MCF 10A (cell line): ENCODE measurements at regions of chr12 and their contacts with region 1.

Region 1: DNA sequence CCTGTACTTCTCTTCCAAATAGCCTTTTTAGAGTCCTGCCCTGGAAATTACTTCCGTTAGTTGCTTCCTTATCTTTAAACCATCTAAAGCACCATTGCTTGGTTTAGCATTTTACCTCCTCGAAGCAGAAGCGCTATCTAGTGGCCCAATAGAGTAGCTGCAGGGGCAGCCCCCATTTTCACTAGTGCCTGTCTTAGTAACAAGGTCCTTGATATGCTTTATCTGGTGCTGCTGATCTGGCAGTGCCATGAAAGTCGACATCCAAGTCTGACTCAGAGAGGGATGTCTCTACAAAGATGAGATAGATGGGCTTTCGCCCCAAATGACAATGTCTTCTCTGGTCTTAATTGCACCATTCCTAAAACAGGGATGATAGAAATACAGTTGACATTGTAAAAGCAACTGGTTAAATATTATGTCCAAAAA is 25.0 kb upstream of the CIT start:
- DNase-seq: peak; percentile 78
- H3K4me3 Mint-ChIP-seq: no peak overlapping the region
- H3K27ac Mint-ChIP-seq: no peak overlapping the region
- H3K4me1 Mint-ChIP-seq: peaks cover 10% of the 10 kb centered on the region
- H3K27me3 Mint-ChIP-seq: no peaks in the 10 kb centered on the region
- CTCF ChIP-seq: peak; percentile 86

Region 2: GRCh38 chr12:119667577-119668323 is 234.3 kb before region 1 on chr12 and contains the start of gene PRKAB1:
- CTCF ChIA-PET with region 1: no interaction called
- POLR2A ChIA-PET with region 1: interaction called, 5 read pairs
- intact Hi-C with region 1: loop called (anchors 5 kb)
- DNase-seq: peak; percentile 98
- H3K4me3 Mint-ChIP-seq: peak within 1 kb of the TSS; percentile 85
- H3K27ac Mint-ChIP-seq: peak within 1 kb of the TSS; percentile 86
- H3K4me1 Mint-ChIP-seq: peaks cover 19% of the 10 kb centered on the region
- H3K27me3 Mint-ChIP-seq: no peaks in the 10 kb centered on the region
- CTCF ChIP-seq: peak; percentile 86
- total RNA-seq, gene PRKAB1: 22.5 and 27.2 TPM in 2 replicates

Region 3: DNA sequence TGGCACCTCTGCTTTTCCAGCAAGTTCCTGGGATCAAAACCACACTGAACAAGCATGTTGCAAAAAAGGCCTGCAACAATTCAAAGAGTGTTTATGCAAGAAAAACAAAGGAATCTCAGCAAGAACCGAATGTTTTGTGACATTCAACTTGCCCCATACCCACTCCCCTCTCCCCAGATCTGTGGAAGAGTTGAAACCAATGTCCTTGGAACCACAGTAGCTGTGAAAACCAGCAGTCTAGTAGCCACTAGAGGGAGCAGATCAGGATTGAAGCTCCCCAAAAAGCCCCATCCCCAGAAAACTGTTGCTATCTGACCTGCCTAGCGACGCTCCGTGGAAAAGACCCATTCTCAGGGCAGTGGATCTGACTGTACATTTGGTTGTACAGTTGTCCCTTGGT is 207.1 kb before region 1 on chr12:
- CTCF ChIA-PET with region 1: interaction called, 12 read pairs
- POLR2A ChIA-PET with region 1: no interaction called
- intact Hi-C with region 1: loop called (anchors 1 kb)
- DNase-seq: peak; percentile 18
- H3K4me3 Mint-ChIP-seq: no peak overlapping the region
- H3K27ac Mint-ChIP-seq: no peak overlapping the region
- H3K4me1 Mint-ChIP-seq: peaks cover 19% of the 10 kb centered on the region
- H3K27me3 Mint-ChIP-seq: no peaks in the 10 kb centered on the region
- CTCF ChIP-seq: peak; percentile 20

Region 4: GRCh38 chr12:119804011-119804641 is 98.0 kb before region 1 on chr12:
- CTCF ChIA-PET with region 1: interaction called, 3 read pairs
- POLR2A ChIA-PET with region 1: no interaction called
- intact Hi-C with region 1: loop called (anchors 1 kb)
- DNase-seq: peak; percentile 76
- H3K4me3 Mint-ChIP-seq: no peak overlapping the region
- H3K27ac Mint-ChIP-seq: peak overlapping the region; percentile 50
- H3K4me1 Mint-ChIP-seq: peaks cover 13% of the 10 kb centered on the region
- H3K27me3 Mint-ChIP-seq: no peaks in the 10 kb centered on the region
- CTCF ChIP-seq: peak; percentile 27

Region 5: DNA sequence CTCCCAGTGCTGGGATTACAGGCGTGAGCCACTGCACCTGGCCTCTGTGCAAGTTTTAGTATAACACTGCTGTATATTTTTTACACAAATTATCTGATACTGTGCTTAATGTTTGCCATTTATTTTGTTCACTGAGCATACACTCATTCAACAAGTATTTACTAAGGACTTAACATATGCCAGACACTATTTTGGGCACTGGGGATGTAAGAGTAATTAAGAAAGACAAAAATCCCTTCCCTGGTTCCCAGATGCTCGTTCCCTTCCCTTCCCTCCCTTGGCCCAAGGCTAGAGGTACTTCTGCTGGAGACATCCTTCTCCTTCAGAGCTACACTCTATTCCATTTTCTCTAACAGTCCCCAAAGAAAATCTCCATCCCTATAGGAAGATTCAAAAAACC is 37.5 kb before region 1 on chr12:
- CTCF ChIA-PET with region 1: no interaction called
- POLR2A ChIA-PET with region 1: no interaction called
- intact Hi-C with region 1: no loop called
- DNase-seq: no peak
- H3K4me3 Mint-ChIP-seq: no peak overlapping the region
- H3K27ac Mint-ChIP-seq: no peak overlapping the region
- H3K4me1 Mint-ChIP-seq: peaks cover 6% of the 10 kb centered on the region
- H3K27me3 Mint-ChIP-seq: no peaks in the 10 kb centered on the region
- CTCF ChIP-seq: no peak

Region 6: DNA sequence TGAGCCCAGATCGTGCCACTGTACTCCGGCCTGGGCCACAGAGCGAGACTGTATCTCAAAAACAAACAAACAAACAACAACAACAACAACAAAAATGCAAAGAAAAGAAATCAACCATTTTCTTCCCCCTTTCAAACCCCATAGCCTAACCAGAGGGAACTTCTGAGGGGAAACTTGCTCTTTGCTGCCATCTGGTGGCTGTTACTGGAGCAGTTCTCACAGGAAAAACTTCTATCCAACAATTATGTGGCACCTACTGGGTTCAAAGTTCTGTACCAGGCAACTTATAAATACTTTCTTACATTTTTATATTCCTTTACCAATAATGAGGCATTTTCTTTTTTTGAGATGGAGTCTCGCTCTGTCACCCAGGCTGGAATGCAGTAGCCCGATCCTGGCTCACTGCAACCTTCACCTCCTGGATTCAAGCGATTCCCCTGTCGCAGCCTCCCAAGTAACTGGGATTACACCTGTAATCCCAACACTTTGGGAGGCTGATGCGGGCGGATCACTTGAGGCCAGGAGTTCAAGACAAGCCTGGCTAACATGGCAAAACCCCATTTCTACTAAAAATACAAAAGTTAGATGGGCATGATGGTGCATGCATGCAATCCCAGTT is 36.1 kb after region 1 on chr12:
- CTCF ChIA-PET with region 1: interaction called, 7 read pairs
- POLR2A ChIA-PET with region 1: interaction called, 3 read pairs
- intact Hi-C with region 1: loop called (anchors 1 kb)
- DNase-seq: peak; percentile 73
- H3K4me3 Mint-ChIP-seq: no peak overlapping the region
- H3K27ac Mint-ChIP-seq: no peak overlapping the region
- H3K4me1 Mint-ChIP-seq: no peaks in the 10 kb centered on the region
- H3K27me3 Mint-ChIP-seq: no peaks in the 10 kb centered on the region
- CTCF ChIP-seq: peak; percentile 74